PC-3 (cell line): ENCODE measurements at regions of chr1 and their contacts with region 1.

Region 1: DNA sequence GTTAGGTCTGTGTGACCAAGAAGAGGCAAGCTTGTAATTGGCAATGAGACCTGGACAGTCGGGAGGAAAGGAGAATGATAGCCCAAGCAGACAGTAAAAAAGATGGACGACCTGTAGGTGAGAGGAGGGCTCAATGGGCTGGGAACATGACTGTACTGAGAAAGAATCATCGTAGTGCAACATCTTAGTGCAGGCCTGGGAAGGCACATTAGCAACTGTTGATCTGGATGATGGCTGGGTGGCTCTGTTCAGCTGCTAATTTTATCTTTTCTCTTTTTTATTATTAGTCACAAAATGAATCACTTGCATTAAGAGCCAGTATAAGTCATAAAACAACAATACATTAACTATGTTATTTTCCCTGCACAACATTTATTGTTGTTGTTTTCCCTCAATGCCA is 32.9 kb downstream of the IFI44 start:
- DNase-seq: peak; percentile 20
- ATAC-seq: peak; percentile 89
- H3K4me3 ChIP-seq: no peak overlapping the region
- H3K27ac ChIP-seq: no peak overlapping the region
- H3K4me1 ChIP-seq: peaks cover 25% of the 10 kb centered on the region
- H3K27me3 ChIP-seq: no peaks in the 10 kb centered on the region
- CTCF ChIP-seq: no peak

Region 2: GRCh38 chr1:77857552-77857951 is 824.9 kb before region 1 on chr1:
- CTCF ChIA-PET with region 1: interaction called, 12 read pairs
- POLR2A ChIA-PET with region 1: no interaction called
- intact Hi-C with region 1: no loop called
- DNase-seq: no peak
- ATAC-seq: peak; percentile 43
- H3K4me3 ChIP-seq: no peak overlapping the region
- H3K27ac ChIP-seq: no peak overlapping the region
- H3K4me1 ChIP-seq: no peaks in the 10 kb centered on the region
- H3K27me3 ChIP-seq: no peaks in the 10 kb centered on the region
- CTCF ChIP-seq: no peak